Activated T-helper 2 cell treated with anti-CD3 and anti-CD28 coated beads, Interferon-gamma antibody, Interleukin-2, Interleukin-4, amounts not matched to agents 10 μg/mL and 5 μg/mL and 100 μg/mL, durations not matched to agents 14 hours and 24 hours and 36 hours (primary cell): ENCODE measurements at regions of chr19 and their contacts with region 1.

Region 1: GRCh38 chr19:12789904-12790619 is 1.2 kb upstream of the JUNB start:
- DNase-seq: peak; percentile 95
- H3K4me3 Mint-ChIP-seq: peak overlapping the region; percentile 95
- H3K27ac Mint-ChIP-seq: peak overlapping the region; percentile 93
- H3K4me1 Mint-ChIP-seq: peaks cover 24% of the 10 kb centered on the region
- H3K27me3 Mint-ChIP-seq: no peaks in the 10 kb centered on the region

Region 2: GRCh38 chr19:12736995-12737834 is 52.8 kb before region 1 on chr19 and contains the start of gene GET3:
- intact Hi-C with region 1: loop called (anchors 5 kb)
- DNase-seq: peak; percentile 78
- H3K4me3 Mint-ChIP-seq: peak within 1 kb of the TSS; percentile 98
- H3K27ac Mint-ChIP-seq: peak within 1 kb of the TSS; percentile 78
- H3K4me1 Mint-ChIP-seq: peaks cover 27% of the 10 kb centered on the region
- H3K27me3 Mint-ChIP-seq: no peaks in the 10 kb centered on the region
- total RNA-seq, gene GET3: 62.7 and 62.8 TPM in 2 replicates

Region 3: GRCh38 chr19:12867120-12868099 is 77.3 kb after region 1 on chr19:
- intact Hi-C with region 1: no loop called
- DNase-seq: peak; percentile 73
- H3K4me3 Mint-ChIP-seq: peak overlapping the region; percentile 69
- H3K27ac Mint-ChIP-seq: peak overlapping the region; percentile 30
- H3K4me1 Mint-ChIP-seq: peaks cover 9% of the 10 kb centered on the region
- H3K27me3 Mint-ChIP-seq: no peaks in the 10 kb centered on the region

Region 4: DNA sequence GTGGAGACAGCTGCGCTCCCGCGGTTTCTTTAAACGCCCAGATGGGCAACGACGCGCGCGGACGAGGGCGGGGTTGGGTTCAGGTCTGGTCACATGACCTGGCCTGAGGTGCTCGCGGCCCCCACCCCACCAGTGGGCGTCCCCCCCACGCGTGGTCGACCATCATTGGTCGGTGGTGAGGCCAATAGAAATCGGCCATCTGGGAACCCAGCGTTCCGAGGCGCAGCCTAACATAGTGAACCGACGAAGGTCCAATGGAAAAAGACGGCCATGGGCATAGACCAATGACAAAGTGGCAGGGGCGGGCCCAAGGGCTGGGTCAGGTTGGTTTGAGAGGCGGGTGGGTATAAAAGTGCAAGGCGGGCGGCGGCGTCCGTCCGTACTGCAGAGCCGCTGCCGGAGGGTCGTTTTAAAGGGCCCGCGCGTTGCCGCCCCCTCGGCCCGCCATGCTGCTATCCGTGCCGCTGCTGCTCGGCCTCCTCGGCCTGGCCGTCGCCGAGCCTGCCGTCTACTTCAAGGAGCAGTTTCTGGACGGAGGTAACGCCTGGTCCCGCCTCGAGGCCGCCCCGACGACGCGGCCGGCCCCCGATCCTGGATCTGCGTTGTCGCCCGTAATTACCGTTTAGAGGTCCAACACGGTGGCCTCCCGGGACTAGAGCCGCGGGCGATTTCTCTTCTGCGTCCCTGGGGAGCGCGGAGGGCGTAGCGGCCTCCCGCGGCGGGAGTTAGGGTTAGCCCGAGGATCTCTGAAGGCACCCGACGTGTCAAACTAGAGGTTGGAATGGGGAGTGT is 148.4 kb after region 1 on chr19 and contains the start of gene CALR:
- intact Hi-C with region 1: loop called (anchors 5 kb)
- DNase-seq: peak; percentile 99
- H3K4me3 Mint-ChIP-seq: peak within 1 kb of the TSS; percentile 99
- H3K27ac Mint-ChIP-seq: peak within 1 kb of the TSS; percentile 84
- H3K4me1 Mint-ChIP-seq: peaks cover 47% of the 10 kb centered on the region
- H3K27me3 Mint-ChIP-seq: no peaks in the 10 kb centered on the region
- total RNA-seq, gene CALR: 984 and 991 TPM in 2 replicates

Region 5: DNA sequence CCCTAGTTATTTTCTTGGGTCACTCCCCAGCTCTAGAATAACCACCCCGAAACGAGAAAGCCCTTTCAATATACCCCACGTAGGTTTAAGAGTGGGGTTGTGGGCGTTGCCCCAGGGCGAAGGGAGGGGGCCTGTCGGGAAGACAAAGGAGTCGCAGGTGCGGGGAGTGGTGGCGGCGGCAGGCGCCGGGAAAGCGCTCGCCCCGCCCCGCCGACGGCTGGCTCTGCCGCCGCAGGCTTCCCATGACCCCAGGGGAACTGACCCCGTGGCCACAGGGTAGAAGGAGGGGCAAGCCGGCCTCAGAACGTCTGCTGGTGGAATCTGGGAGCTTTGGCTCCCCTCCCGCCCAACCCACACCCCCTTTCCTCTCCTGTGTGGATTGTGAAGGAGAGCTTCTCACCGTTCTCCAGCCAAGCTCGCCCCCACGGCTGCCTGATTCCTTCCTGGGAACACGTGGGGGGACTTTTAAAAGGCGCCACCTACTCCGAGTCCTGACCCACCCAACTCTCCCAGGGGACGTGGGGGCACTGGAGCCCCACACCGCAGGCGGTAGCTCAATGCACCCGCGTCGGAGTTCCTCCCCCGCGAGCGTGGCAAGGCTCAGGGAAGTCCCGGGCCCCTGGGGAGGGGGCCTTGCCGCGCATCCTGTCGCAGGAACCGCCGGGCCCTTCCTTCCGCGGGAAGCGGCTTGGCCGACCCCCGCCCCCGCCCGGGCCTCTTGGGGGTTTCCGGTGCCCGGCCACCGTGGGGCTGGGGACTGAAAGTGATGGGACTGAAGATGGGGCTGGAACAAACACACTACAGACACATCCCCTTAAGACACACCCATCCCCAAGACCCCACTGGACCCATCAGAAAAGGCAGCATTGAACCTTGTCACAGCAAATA is 365.7 kb after region 1 on chr19:
- intact Hi-C with region 1: loop called (anchors 2 kb)
- DNase-seq: peak; percentile 76
- H3K4me3 Mint-ChIP-seq: peak overlapping the region; percentile 96
- H3K27ac Mint-ChIP-seq: peak overlapping the region; percentile 99
- H3K4me1 Mint-ChIP-seq: peaks cover 32% of the 10 kb centered on the region
- H3K27me3 Mint-ChIP-seq: no peaks in the 10 kb centered on the region

Region 6: GRCh38 chr19:13839130-13839937 is 1049.3 kb after region 1 on chr19:
- intact Hi-C with region 1: loop called (anchors 5 kb)
- DNase-seq: peak; percentile 77
- H3K4me3 Mint-ChIP-seq: peak overlapping the region; percentile 92
- H3K27ac Mint-ChIP-seq: peak overlapping the region; percentile 90
- H3K4me1 Mint-ChIP-seq: peaks cover 29% of the 10 kb centered on the region
- H3K27me3 Mint-ChIP-seq: no peaks in the 10 kb centered on the region